Right ventricle myocardium inferior (tissue), 1 donor: ENCODE measurements at regions of chrX and their contacts with region 1.

Region 1: GRCh38 chrX:79270401-79270800 is 96.7 kb downstream of the ITM2A start:
- DNase-seq: no peak
- ATAC-seq: no peak

Region 2: DNA sequence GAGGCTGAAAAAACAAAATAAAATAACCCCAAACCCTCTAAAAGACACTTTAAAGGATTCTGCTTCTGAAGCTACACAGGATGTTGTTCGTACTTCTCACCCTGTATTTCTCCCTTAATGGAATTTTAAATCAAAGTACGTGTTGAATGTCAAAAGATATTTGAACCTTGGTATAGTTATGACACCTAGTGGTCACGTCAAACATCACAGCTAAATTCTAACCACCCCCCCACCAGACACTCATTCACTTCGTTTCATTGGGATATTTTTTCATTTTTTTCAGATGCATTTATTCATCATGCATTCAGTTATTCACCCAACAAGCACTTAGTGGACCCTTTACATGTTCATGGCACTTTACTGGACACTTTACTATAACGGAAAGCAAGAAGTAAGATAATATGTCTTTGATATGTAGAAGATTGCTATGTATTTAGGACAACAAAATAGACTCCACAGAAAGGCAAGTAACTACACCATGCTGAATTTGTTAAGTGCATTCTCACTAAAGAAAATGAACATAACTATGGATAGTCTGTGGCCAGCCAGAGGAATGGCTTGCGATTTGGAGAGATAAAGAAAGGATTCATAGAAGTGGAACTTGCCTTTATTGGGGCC is 188.4 kb before region 1 on chrX:
- intact Hi-C with region 1: no loop called
- DNase-seq: no peak
- ATAC-seq: no peak

Region 3: DNA sequence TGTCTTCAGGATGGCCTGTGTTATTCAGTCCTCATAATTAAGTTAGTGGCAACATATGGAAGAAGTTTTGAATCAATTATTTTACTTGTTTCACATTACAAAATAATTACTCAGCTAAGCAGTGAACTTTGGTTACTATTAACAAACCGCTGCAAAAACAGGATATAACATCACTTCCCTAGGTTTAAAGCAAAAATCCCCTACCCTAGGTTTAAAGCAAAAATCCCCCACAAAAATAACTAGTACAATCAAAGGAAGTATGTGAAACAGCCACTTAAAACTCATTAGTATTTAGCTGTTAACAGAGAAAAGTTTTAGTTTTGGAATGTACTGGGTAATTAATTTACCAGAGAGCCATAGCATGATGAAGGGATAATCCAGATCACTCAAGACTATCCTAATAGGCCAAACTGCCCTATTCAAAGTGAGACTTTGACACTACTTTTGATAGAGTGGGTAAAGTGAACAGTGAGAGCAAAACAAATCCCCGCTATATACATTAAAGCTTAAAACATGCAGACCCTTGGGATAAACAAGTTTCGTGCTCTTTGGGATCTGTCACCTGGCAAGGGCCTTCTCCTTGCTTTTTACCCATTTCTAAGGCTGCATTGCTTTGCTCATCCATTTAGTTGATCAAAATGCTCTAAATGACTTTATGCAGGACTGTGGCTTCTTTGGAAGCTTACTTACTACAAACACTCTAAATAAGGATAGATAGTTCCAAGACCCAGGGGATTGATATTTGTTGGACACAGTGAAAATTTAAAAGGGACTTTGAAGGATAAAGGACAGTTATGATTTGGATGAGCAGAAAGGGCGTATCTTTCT is 162.3 kb before region 1 on chrX:
- intact Hi-C with region 1: loop called (anchors 10 kb)
- DNase-seq: no peak
- ATAC-seq: no peak

Region 4: GRCh38 chrX:79161655-79162054 is 108.7 kb before region 1 on chrX:
- intact Hi-C with region 1: loop called (anchors 10 kb)
- DNase-seq: no peak
- ATAC-seq: no peak

Region 5: DNA sequence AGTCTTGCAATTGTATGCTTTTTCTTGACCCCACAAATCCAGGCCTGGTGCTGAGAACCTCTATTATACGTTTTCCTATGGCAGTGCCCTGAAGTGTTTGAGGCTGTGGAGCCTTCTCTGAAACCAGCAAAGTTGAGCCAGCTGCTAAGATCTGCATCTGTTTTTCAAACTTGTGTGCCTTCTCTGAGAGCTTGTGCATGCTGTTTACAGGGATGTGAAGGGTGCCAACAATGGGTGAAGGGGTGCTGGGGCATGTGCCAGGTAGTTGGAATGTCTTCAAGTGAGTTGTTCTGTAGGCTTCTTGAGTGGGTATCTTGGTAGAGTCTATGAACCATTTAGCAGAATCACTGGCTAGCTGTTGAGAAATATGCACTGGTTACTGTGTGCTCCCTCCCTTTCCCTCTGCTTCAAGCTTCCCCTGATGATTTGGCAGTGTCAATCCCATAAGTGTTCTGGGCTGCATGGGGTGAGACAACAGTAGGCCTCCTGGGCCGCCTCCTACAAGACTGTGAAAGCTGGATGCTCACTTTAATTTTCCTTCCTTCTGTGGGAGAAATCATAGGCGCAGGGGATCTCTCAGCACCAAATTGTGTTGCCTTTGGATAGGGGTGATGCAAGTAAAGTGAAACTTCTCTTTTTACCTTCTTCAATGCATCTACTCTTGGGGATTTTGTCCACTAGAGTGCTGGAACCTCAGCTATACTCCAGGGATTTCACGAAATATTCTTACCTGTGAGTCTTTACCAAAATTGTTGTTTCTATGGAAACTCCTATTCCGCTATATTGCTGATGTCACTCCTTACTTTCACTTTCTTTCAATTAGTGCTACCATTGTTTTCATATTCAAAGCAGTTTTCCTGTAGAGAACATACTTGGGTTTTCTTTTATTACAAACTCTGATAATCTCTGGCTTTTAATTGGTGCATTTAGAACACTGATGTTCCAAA is 66.7 kb after region 1 on chrX:
- intact Hi-C with region 1: no loop called
- DNase-seq: no peak
- ATAC-seq: no peak

Region 6: DNA sequence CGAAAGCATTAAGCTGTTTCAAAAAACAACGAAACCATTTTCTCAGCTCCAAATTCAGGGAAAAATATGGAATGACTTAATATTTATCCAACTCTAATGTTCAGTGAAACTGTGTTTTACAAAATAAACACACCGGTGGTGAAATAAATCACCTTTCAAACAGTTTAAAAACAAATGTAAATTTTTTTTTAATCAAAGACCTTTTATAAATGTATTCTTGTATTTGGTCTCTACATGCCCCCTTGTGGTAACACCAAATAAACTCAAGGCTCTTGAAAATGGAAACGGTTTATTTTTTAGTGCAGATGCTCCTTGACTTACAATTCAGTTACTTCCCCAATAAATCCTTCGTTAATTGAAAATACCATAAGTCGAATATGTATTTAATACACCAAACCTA is 142.6 kb after region 1 on chrX:
- intact Hi-C with region 1: loop called (anchors 5 kb)
- DNase-seq: no peak
- ATAC-seq: no peak